Activated T-helper 2 cell treated with anti-CD3 and anti-CD28 coated beads, Interferon-gamma antibody, Interleukin-2, Interleukin-4, amounts not matched to agents 10 μg/mL and 5 μg/mL and 100 μg/mL, durations not matched to agents 14 hours and 24 hours and 36 hours (primary cell): ENCODE measurements at regions of chr1 and their contacts with region 1.

Region 1: DNA sequence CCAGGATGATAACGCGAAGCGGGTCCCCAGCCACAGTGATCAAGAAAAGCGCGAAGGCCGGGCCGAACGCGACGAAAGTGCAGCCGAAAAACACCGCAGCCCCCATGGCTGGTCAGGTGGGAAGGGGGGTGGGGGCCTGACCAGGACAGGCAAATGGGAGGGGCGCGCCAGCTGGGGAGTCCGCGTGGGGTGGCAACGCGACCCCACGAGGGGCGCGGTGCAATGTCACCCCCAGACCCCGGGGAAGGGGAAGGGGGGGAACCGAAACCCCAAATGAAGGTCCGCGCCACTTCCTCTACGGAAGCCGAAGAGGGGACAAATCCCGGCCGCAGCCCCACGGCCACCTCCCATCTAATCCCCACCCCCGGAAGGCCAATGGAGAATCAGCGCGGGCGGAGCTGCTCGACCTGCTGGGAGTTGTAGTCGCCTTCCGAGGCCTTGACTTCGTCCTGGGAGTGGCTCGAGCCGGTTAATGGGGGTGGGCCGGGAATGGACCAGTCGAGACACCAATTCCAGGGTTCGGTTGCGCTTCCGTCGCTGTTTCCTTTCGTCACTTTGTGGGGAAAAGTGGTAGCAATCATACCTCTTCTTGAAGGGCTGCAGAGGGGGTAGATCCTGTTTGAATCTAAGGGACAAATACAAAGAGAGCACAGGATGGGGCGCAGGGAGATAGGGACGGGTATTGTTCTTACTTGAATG is at the start of gene APH1A:
- DNase-seq: peak; percentile 92
- H3K4me3 Mint-ChIP-seq: peak within 1 kb of the TSS; percentile 91
- H3K27ac Mint-ChIP-seq: peak within 1 kb of the TSS; percentile 80
- H3K4me1 Mint-ChIP-seq: peaks cover 17% of the 10 kb centered on the region
- H3K27me3 Mint-ChIP-seq: no peaks in the 10 kb centered on the region
- total RNA-seq, gene APH1A: 103 and 105 TPM in 2 replicates

Region 2: GRCh38 chr1:150207281-150207971 is 61.4 kb before region 1 on chr1:
- intact Hi-C with region 1: no loop called
- DNase-seq: no peak
- H3K4me3 Mint-ChIP-seq: no peak overlapping the region
- H3K27ac Mint-ChIP-seq: no peak overlapping the region
- H3K4me1 Mint-ChIP-seq: no peaks in the 10 kb centered on the region
- H3K27me3 Mint-ChIP-seq: peaks cover 8% of the 10 kb centered on the region

Region 3: DNA sequence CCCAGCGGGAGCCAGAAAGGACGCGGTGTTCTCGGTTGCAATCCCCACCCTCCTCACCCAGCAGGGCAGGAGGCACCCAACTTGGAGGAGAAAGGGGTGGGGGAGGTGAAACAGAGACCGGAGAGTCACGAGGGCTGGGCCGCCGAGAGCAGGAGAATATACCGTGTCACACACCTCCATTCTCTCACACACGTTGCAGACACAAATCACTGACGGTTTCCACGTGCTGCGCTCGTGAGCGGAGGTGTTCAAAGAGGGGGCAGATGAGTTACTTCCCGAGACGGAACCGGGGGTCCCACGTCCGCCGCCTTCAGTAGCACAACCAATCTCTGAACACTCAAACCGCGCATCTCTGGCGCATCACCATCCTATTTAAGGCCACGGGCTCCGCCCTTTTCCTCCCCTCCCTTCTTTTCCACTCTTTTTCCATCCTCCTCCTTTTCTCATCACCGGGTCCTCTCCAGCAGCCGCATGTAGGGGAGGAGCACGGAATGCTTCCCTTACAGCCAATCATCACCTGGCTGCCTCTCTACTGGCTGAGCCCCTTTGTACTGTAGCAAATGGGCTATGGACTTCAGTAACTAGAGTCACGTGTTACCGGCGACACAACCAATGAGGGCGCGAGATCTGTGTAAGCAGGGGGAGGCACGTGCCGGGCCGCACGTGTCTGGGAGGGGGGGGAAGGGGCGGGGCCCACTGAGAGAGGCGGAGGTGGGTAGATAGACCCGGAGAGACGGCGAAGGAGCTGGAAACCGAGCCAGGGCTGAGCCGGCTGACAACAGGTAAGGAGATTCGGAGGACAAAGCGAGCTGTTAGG is 13.2 kb after region 1 on chr1 and contains the start of gene CIART:
- intact Hi-C with region 1: loop called (anchors 1 kb)
- DNase-seq: peak; percentile 72
- H3K4me3 Mint-ChIP-seq: peak within 1 kb of the TSS; percentile 90
- H3K27ac Mint-ChIP-seq: peak within 1 kb of the TSS; percentile 86
- H3K4me1 Mint-ChIP-seq: peaks cover 24% of the 10 kb centered on the region
- H3K27me3 Mint-ChIP-seq: peaks cover 17% of the 10 kb centered on the region
- total RNA-seq, gene CIART: 4.2 TPM in 2 replicates

Region 4: DNA sequence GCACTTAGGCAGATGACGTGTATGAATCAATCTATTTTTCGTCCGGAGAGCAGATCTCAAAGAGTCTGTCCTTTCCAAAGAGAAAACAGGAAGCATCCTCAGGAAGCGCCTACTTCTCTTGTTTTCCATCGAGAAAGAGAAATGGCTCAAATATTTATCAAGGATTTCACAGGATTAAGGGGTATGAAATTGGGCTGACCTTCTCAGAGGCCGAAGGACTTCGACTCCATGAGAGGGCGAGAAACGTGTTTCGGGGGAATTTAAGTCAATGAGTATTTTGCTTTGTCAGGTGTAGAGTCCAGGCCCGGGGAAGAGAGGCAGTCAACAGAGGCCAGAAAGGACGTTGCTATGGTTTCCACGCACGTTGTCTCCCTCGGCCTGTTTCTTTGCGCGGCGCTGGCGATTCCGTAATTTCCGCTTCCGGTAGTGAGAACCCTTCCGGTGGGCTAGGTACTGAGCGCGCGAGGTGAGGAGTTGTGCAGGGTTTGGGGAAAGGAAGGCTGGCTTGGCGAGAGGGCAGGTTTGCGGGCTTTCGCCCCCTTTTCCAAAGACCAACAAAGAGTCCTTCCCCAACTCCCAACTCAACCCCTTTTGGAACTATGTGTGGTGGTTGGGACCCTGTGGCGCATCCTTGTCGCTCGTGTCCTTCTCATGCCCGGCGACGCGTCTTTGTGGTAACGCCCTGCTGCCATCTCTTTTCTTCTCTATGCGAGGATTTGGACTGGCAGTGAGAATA is 24.7 kb after region 1 on chr1 and contains the start of gene MRPS21:
- intact Hi-C with region 1: loop called (anchors 1 kb)
- DNase-seq: peak; percentile 86
- H3K4me3 Mint-ChIP-seq: peak within 1 kb of the TSS; percentile 92
- H3K27ac Mint-ChIP-seq: peak within 1 kb of the TSS; percentile 98
- H3K4me1 Mint-ChIP-seq: peaks cover 21% of the 10 kb centered on the region
- H3K27me3 Mint-ChIP-seq: no peaks in the 10 kb centered on the region
- total RNA-seq, gene MRPS21: 80.7 and 83.4 TPM in 2 replicates

Region 5: DNA sequence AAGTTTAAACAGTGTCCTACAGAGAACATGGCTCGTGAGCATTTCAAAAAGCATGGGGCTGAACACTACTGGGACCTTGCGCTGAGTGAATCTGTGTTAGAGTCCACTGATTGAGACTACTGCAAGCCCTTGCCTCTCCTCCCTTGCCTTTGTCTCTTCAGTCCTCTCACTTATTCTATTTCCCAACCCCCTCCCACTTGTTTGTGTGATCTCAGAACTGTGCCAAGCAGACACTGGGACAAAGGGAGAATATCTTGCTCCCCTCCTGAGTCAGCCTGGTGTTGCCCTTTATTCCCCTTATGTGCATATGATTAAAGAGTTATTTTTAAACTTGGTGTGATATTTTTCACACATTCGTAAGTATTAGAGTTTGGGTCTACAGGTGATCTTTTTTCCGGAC is 84.0 kb after region 1 on chr1:
- intact Hi-C with region 1: no loop called
- DNase-seq: no peak
- H3K4me3 Mint-ChIP-seq: no peak overlapping the region
- H3K27ac Mint-ChIP-seq: no peak overlapping the region
- H3K4me1 Mint-ChIP-seq: no peaks in the 10 kb centered on the region
- H3K27me3 Mint-ChIP-seq: no peaks in the 10 kb centered on the region

Region 6: GRCh38 chr1:150493163-150493562 is 224.3 kb after region 1 on chr1:
- intact Hi-C with region 1: no loop called
- DNase-seq: no peak
- H3K4me3 Mint-ChIP-seq: no peak overlapping the region
- H3K27ac Mint-ChIP-seq: no peak overlapping the region
- H3K4me1 Mint-ChIP-seq: peaks cover 9% of the 10 kb centered on the region
- H3K27me3 Mint-ChIP-seq: no peaks in the 10 kb centered on the region